Left lung (tissue), 14 donors: ENCODE measurements at regions of chr2 and their contacts with region 1.

Region 1: DNA sequence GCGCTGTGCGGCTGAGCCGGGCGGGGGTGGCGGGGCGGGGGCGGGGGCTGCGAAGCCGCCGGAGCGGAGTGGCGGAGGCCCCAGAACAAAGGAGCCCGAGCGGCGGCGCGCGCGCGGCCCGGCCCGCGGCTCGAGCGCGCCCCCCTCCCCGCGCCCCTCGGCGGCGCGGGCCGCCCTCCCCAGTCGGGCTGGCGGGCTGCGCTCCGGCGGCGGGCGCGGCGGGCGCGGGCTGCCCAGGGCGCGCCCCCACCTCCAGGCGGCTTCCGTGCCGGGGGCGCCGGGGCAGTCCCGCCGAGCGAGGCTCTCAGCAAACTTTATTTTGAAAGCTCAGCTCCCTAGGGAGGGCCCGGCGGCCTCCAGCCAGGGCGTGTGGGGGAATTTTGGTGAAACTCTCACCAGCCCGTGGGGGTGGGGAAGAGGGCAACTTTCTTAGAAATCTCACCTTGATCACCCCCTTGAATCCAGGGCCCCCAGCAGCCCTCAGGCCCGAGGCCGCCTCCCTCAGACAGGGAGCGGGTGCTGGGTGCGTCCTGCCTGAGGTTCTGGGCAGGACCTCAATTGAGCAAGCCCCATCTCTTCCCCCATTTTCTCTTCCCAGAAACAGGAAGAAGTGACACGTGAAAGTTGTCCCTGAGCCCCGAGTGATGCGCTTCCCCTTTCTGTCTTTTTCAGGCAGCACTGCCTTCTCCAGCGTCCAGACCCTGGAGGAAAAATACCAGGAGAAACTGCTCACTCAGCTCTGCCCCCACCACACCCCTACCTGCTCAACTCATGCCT is 786 bp downstream of the TET3 start:
- DNase-seq: peak in 2 of 4 donors; percentile 69 to 91
- ATAC-seq: no peak
- H3K4me3 ChIP-seq: peak overlapping the region; percentile 53 to 65
- H3K27ac ChIP-seq: peak overlapping the region; percentile 82 to 93
- H3K4me1 ChIP-seq: peaks cover 33 to 90% of the 10 kb centered on the region in 2 donors
- H3K27me3 ChIP-seq: no peaks in the 10 kb centered on the region
- CTCF ChIP-seq: no peak

Region 2: DNA sequence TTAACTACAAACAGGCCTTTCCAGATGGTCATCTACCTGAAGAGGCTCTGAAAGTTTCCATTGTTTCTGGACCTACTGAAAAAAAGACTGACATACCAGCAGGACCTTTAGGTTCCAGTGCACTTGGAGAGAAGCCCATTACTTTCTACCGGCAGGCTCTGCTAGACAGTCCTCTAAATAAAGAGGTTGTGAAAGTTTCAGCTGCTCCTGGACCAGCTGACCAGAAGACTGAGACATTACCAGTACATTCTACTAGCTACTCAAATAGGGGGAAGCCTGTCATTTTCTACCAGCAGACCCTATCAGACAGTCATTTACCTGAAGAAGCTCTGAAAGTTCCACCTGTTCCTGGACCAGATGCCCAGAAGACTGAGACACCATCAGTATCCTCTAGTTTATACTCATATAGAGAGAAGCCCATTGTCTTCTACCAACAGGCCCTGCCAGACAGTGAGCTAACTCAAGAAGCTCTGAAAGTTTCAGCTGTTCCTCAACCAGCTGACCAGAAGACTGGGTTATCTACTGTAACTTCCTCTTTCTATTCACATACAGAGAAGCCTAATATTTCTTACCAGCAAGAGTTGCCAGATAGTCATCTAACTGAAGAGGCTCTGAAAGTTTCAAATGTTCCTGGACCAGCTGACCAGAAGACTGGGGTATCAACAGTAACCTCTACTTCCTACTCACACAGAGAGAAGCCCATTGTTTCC is 534.1 kb before region 1 on chr2:
- intact Hi-C with region 1: no loop called
- DNase-seq: no peak
- ATAC-seq: peak; percentile 22
- H3K4me3 ChIP-seq: no peak overlapping the region
- H3K27ac ChIP-seq: no peak overlapping the region
- H3K4me1 ChIP-seq: no peaks in the 10 kb centered on the region
- H3K27me3 ChIP-seq: no peaks in the 10 kb centered on the region
- CTCF ChIP-seq: no peak

Region 3: GRCh38 chr2:73870084-73870483 is 115.4 kb before region 1 on chr2:
- intact Hi-C with region 1: no loop called
- DNase-seq: peak in 2 of 4 donors; percentile 54 to 87
- ATAC-seq: no peak
- H3K4me3 ChIP-seq: no peak overlapping the region
- H3K27ac ChIP-seq: no peak overlapping the region
- H3K4me1 ChIP-seq: no peaks in the 10 kb centered on the region
- H3K27me3 ChIP-seq: no peaks in the 10 kb centered on the region
- CTCF ChIP-seq: no peak

Region 4: GRCh38 chr2:73926493-73927338 is 58.8 kb before region 1 on chr2 and contains the start of gene DGUOK:
- intact Hi-C with region 1: loop called in 1 of 2 experiments (anchors 10 kb)
- DNase-seq: peak; percentile 96 to 100 (median 99)
- ATAC-seq: peak; percentile 99
- H3K4me3 ChIP-seq: peak within 1 kb of the TSS; percentile 57 to 77
- H3K27ac ChIP-seq: peak within 1 kb of the TSS; percentile 96 to 97
- H3K4me1 ChIP-seq: peaks cover 15 to 64% of the 10 kb centered on the region in 2 donors
- H3K27me3 ChIP-seq: no peaks in the 10 kb centered on the region
- CTCF ChIP-seq: no peak
- polyA plus RNA-seq, gene DGUOK: 57.4 to 64.5 (median 61.0) TPM